ENCODE measurements at regions of chr4 and their contacts with region 1.

Region 1: GRCh38 chr4:125483278-125483677 is 168.5 kb downstream of the FAT4 start:
- DNase-seq: no peak
- ATAC-seq: no peak

Region 2: GRCh38 chr4:125314676-125315575 is 168.4 kb before region 1 on chr4 and contains the start of gene FAT4:
- intact Hi-C with region 1: no loop called
- DNase-seq: peak; percentile 98
- ATAC-seq: peak; percentile 96
- total RNA-seq, gene FAT4: 6.5 TPM

Region 3: DNA sequence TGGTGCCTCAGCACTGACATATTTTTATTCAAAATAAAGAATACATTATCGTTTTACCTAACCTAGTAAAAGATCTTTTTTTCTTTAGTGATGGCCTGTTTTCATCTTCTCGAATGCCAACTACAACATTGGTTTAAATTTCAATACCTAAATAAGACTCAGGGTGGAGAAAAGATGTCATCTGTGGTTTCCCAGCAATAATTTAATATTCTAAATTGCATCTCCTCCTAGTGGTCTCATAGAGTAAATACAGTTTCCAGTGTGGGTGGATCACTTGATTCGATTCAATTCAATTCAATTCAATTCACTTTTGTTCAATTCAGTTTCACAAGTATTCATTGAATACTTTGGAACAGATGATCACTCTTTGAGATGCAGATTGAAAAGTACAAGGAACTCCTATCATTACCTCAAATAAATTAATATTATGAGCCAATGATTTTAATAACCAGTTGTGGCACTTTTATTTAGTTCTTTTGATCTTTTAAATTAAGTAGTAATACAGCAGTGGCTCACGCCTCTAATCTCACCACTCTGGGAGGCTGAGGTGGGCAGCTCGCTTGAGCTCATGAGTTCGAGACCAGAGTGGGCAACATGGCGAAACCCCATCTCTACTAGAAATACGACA is 258.7 kb after region 1 on chr4:
- intact Hi-C with region 1: loop called (anchors 10 kb)
- DNase-seq: no peak
- ATAC-seq: no peak

Region 4: DNA sequence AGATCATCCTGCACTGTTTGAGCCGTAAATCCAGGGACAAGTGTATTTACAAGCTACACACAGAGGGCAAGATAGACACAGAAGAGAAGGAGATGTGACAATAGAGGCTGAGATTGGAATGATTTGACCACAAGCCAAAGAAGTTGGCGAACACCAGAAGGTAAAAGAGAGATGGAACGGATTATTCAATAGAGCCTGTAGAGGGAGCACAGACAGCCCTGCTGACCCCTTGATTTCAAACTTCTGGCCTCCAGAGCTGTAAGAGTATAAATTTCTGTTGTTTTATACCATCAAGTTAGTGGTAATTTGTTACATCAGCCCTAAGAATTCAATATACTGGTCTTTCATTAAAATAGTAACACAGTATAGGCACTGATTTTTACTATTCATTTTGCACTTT is 279.3 kb after region 1 on chr4:
- intact Hi-C with region 1: no loop called
- DNase-seq: no peak
- ATAC-seq: no peak